GM10248 (cell line): ENCODE measurements at regions of chr2 and their contacts with region 1.

Region 1: DNA sequence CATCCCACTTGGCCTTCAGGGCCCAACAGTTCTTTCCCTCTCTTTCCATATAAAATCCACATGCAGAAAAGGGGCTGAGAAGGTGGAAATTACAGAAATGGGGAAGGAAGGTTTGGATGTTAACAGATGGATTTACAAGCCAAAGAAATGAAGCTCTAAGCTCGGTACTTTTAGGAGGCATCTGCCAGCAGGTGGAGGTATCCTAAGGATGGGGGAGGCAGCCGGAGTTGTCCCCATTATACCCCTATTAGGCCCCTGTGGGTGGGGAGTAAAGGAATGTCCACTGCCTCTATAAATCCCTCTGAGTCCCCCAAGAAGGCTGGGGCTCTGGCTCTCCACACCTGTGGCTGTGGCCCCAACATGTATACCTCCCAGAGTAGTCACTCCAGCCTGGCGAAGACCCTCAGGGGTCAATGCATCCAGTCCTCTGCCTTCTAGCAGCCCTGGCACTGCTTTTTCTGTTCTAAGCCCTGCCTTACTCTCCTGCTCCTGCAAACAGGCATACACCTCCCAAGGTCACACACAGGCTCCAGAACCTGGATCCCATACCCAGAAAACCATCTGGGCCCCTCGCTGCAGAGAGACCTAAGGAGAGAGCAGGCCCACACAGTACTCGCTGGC is 1.2 kb downstream of the FBXO41 start:
- DNase-seq: no peak
- CTCF ChIP-seq: no peak

Region 2: DNA sequence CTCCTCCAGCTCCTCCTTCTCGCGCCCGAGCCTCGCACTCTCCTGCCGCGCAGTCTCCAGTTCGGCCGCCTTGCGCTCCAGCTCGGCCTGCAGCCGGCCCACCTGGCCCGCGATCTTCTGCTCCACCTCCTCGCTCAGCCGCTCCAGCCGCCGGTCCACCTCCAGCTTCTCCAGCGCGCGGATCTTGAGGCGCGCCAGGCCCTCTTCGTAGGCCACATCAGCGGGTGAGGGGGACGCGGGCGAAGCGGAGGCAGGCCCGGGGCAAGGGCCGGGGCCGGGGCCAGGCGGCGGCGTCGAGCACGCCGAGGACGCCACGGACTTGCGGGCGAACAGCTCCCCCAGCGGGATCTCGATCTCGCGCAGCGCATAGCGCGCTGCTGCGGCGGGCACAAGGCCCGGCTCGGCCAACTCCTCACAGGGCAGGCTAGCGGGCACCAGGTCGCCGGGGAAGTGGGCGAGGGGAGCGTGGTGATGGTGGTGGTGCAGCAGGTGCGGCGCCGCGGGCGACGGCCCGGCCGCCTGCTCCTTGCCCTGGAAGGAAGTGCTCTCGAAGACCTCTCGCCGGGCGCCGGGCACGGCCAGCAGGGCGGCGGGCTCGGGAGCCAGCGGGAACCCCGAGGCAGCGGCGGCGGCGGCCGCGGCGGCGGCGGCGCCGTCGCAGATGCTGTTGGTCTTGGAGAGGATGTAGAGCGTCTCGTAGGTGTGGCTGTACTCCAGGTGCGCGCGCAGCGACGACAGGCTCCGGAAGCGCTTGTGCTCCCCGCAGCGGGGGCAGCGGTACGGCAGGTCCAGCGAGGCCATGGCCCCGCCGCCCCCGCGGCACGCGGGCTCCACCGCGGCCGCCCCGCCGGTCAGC is 14.0 kb before region 1 on chr2:
- CTCF ChIA-PET with region 1: interaction called, 13 read pairs
- POLR2A ChIA-PET with region 1: no interaction called
- DNase-seq: peak; percentile 91
- CTCF ChIP-seq: no peak

Region 3: DNA sequence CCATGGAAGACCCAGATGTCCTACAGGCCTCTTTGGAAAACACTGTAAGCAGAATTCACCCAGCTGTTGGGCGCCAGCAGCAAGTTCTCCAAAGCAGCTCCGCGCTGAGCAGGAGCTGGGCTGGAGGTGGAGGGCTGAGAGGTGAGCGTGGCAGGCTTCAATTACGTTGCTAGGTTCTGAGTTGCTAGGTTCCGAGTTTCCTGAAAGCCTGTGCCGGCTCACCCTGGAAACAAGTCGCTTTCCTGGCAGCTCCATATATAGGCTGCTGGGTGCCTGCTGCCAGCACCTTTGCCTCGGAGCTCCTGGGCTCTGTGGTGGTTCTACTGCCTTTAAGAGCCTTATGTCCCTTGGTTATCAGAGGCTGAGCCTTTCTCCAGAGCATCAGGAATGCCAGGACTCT is 24.7 kb after region 1 on chr2:
- CTCF ChIA-PET with region 1: no interaction called
- POLR2A ChIA-PET with region 1: no interaction called
- DNase-seq: no peak
- CTCF ChIP-seq: no peak